SK-N-SH (cell line): ENCODE measurements at regions of chr15 and their contacts with region 1.

Region 1: DNA sequence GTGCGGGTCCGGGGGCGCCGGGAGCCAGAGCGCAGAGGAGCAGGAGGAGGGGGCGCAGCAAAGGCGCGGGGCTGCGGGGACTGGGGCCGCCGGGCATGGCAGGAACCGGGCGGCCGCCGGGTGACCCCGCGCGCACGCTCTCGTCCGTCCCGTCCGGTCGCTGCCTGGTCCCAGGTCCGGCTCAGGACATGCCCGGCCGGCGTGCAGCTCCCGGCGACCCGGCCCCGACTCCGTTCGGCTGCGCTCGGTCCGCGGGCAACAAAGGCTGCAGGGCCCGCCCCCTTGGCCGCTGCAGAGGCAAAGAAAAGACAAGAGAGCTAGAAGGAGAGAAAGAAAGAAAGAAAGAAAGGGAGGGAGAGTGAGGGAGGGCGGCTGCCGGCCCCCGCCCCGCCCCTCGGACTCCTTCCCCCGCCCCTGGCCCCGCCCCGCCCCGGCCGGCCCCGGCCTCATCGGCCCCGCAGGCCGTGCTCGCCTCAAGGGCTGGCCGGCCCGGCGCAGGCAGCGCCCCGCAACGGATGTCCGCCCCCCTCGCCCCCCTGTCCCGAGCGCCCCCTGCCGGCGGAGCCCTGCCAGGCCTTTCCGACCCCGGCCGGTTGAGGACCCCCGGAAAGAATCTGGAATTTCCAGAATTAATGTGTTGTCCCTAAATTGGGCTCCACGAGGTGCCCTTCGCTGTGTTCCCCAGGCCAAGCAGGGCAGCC is at the start of gene ADAMTS7:
- DNase-seq: peak; percentile 99
- H3K4me3 ChIP-seq: peak within 1 kb of the TSS; percentile 65 to 74
- H3K27ac ChIP-seq: peak within 1 kb of the TSS; percentile 49 to 74
- H3K4me1 ChIP-seq: peaks cover 0 to 20% of the 10 kb centered on the region in 2 experiments; a peak in 2 of 4 replicates
- H3K27me3 ChIP-seq: no peaks in the 10 kb centered on the region
- CTCF ChIP-seq: peak; percentile 90
- EP300 ChIP-seq: no peak
- RAD21 ChIP-seq: no peak
- polyA plus RNA-seq, gene ADAMTS7: 12.7 and 17.9 TPM in 2 replicates

Region 2: DNA sequence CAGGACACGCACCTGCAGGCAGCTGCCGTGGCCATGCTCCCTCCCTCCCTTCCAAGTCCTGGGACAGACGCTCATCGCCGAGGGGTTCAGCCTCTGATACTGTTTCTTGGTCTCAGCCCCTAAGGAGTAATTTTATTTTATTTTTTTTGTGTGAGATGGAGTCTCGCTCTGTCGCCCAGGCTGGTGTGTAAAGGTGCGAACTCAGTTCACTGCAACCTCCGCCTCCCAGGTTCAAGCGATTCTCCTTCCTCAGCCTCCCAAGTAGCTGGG is 53.7 kb before region 1 on chr15:
- CTCF ChIA-PET with region 1: interaction called, 39 read pairs
- POLR2A ChIA-PET with region 1: interaction called, 5 read pairs
- DNase-seq: no peak
- H3K4me3 ChIP-seq: no peak overlapping the region
- H3K27ac ChIP-seq: peak overlapping the region in 1 of 2 experiments; percentile 88; a peak in 2 of 4 replicates
- H3K4me1 ChIP-seq: peaks cover 0 to 82% of the 10 kb centered on the region in 2 experiments; a peak in 2 of 4 replicates
- H3K27me3 ChIP-seq: no peaks in the 10 kb centered on the region
- CTCF ChIP-seq: no peak
- EP300 ChIP-seq: no peak
- RAD21 ChIP-seq: no peak

Region 3: GRCh38 chr15:78795670-78796069 is 15.6 kb before region 1 on chr15:
- CTCF ChIA-PET with region 1: interaction called, 23 read pairs
- POLR2A ChIA-PET with region 1: interaction called, 3 read pairs
- DNase-seq: no peak
- H3K4me3 ChIP-seq: no peak overlapping the region
- H3K27ac ChIP-seq: no peak overlapping the region
- H3K4me1 ChIP-seq: peaks cover 0 to 6% of the 10 kb centered on the region in 2 experiments; a peak in 1 of 4 replicates
- H3K27me3 ChIP-seq: no peaks in the 10 kb centered on the region
- CTCF ChIP-seq: no peak
- EP300 ChIP-seq: no peak
- RAD21 ChIP-seq: no peak

Region 4: DNA sequence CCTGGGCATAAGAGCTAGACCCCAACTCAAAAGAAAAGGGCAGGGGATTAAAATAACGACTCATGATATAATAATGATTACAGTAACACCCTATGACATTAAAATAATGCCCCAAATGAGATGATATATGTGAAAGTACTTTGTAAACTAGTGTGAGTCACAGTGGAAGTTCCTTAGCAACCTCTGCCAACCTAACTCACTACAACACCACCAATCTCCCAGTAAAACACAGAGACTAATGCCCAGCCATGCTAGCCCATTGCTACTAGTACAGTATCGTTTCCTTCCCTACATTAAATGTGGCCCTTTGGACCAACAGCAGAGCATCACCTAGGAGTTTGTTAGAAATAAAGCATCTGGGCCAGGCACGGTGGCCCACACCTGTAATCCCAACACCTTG is 11.2 kb after region 1 on chr15:
- CTCF ChIA-PET with region 1: interaction called, 14 read pairs
- POLR2A ChIA-PET with region 1: no interaction called
- DNase-seq: no peak
- H3K4me3 ChIP-seq: no peak overlapping the region
- H3K27ac ChIP-seq: no peak overlapping the region
- H3K4me1 ChIP-seq: peaks cover 0 to 3% of the 10 kb centered on the region in 2 experiments; a peak in 1 of 4 replicates
- H3K27me3 ChIP-seq: no peaks in the 10 kb centered on the region
- CTCF ChIP-seq: no peak
- EP300 ChIP-seq: no peak
- RAD21 ChIP-seq: no peak

Region 5: GRCh38 chr15:78859971-78860732 is 48.9 kb after region 1 on chr15:
- CTCF ChIA-PET with region 1: interaction called, 17 read pairs
- POLR2A ChIA-PET with region 1: no interaction called
- DNase-seq: peak; percentile 83
- H3K4me3 ChIP-seq: peak overlapping the region; percentile 53 to 64
- H3K27ac ChIP-seq: peak overlapping the region; percentile 82 to 83
- H3K4me1 ChIP-seq: no peaks in the 10 kb centered on the region; a peak in 1 of 4 replicates
- H3K27me3 ChIP-seq: no peaks in the 10 kb centered on the region
- CTCF ChIP-seq: peak; percentile 63
- EP300 ChIP-seq: no peak; a peak in 1 of 4 replicates
- RAD21 ChIP-seq: peak; percentile 49

Region 6: DNA sequence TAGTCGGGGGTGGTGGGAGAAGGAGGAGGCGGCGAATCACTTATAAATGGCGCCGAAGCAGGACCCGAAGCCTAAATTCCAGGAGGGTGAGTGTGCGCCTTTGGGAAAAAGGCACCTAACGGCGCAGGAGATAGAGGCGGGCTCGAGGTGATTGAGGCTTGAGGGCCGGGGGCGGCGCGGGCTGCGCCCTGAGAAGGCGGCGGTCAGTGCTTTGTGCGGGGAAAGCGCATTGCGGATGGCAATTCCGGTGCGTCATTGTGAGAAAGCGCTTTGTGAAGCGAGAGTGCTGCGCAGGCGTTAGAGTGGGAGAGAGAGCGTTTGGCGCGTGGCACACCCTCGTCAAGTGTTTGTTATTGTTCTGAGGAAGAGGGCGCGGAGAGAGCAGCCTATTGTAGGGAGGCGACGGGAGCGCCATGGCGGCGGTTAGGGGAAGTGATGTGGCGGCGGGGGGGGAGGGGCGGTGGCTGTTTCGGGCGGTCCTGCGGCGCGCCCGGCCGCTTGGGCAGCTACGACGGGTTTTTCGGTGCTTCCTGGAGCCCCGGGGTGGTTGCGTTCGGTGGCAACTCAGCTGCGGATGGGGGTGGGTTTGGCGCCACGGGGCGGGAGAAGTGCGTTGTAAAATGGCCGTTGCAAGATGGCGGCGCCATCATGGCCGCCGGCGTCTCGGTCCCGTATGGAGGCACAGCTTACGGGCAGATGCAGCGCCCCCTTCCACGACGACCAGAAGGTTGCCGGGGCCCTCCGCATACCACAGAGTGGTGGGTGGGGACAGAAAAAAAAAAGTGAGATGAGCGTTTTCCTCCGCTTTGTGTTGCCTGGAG is 61.9 kb after region 1 on chr15:
- CTCF ChIA-PET with region 1: interaction called, 27 read pairs
- POLR2A ChIA-PET with region 1: interaction called, 6 read pairs
- DNase-seq: peak; percentile 85
- H3K4me3 ChIP-seq: peak overlapping the region; percentile 66 to 92
- H3K27ac ChIP-seq: peak overlapping the region; percentile 92 to 100
- H3K4me1 ChIP-seq: peaks cover 7 to 11% of the 10 kb centered on the region in 2 experiments; a peak in 3 of 4 replicates
- H3K27me3 ChIP-seq: no peaks in the 10 kb centered on the region
- CTCF ChIP-seq: peak; percentile 56
- EP300 ChIP-seq: no peak; a peak in 2 of 4 replicates
- RAD21 ChIP-seq: peak; percentile 23; the same call in 1 of the 2 replicates